T-cell (primary cell): ENCODE measurements at regions of chr5 and their contacts with region 1.

Region 1: DNA sequence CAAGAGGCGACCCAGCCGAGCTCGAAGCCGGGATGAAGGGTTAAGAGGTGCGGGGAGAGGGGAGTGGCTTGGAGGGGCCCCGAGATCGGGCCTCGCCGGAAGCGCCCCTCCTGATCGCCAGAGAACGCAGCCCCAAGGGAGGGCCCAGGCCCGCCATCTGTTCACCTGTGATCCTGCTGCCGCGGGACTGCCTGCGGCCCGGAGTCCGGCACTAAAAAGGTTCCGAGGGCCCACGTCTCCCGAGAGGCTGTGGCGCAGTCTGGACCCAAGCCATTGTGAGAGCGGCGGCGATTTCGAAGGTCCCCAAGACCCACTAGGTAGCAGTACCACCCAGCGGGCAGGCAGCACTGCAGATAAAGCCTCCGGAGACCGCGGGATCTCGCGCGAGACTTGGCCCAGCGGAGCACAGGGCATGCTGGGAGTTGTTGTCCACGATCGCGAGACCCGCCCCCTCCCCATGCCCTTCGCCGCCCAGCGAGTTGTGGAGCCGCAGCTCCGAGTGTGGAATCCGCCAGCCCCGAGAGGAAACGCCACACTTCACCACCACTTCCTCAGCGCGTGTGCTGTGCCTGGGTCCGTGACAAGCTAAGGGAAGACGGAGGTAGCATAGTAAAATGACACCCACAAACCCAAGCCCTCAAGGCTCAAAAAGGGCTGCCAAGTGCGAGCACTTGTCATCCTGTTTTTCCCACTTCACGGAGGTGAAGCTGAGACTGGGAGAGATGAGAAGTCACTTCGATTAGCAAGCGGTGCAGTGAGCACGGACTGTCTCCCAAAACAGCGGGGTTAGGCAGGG is at the start of gene KIAA1191:
- DNase-seq: peak; percentile 89 to 97 (median 96)
- ATAC-seq: peak; percentile 91 to 92 (median 92)
- H3K4me3 ChIP-seq: peak within 1 kb of the TSS; percentile 92 to 95
- H3K4me3 Mint-ChIP-seq: peak within 1 kb of the TSS; percentile 92 to 98 (median 98)
- H3K27ac ChIP-seq: peak within 1 kb of the TSS; percentile 72
- H3K27ac Mint-ChIP-seq: peak within 1 kb of the TSS; percentile 95 to 99
- H3K4me1 ChIP-seq: peaks cover 14 to 44% of the 10 kb centered on the region in 2 experiments
- H3K4me1 Mint-ChIP-seq: peaks cover 32 to 41% (median 36%) of the 10 kb centered on the region in 3 donors
- H3K27me3 ChIP-seq: no peaks in the 10 kb centered on the region
- H3K27me3 Mint-ChIP-seq: no peaks in the 10 kb centered on the region
- total RNA-seq, gene KIAA1191: 66.4 to 79.3 (median 72.8) TPM

Region 2: GRCh38 chr5:175469945-175470596 is 891.6 kb before region 1 on chr5:
- CTCF ChIA-PET with region 1: no interaction called
- POLR2A ChIA-PET with region 1: interaction called in 1 of 2 experiments, 12 read pairs
- DNase-seq: no peak
- ATAC-seq: no peak
- H3K4me3 ChIP-seq: no peak overlapping the region
- H3K4me3 Mint-ChIP-seq: no peak overlapping the region
- H3K27ac ChIP-seq: no peak overlapping the region
- H3K27ac Mint-ChIP-seq: no peak overlapping the region
- H3K4me1 ChIP-seq: no peaks in the 10 kb centered on the region
- H3K4me1 Mint-ChIP-seq: peaks cover 0 to 9% (median 5%) of the 10 kb centered on the region in 3 donors
- H3K27me3 ChIP-seq: no peaks in the 10 kb centered on the region
- H3K27me3 Mint-ChIP-seq: peaks cover 0 to 2% of the 10 kb centered on the region in 2 donors

Region 3: DNA sequence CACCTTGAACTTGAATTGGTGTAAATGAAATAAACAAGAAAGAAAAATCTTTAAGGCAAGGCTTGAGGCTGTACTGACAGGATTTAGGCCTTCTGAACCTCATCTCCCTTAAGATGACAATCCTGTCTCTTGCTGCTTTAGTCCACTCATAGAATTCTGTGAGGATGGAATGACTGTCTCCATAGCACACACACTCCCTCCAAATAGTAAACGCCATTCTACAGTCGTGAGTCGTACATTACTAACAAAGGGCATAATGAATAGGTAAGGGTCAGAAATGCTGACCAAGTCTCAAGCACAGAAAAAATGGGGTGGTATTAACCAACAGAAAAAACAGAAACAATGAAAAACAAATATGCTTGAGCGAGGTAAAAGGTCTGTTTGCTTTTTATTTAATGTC is 195.2 kb before region 1 on chr5:
- CTCF ChIA-PET with region 1: no interaction called
- POLR2A ChIA-PET with region 1: no interaction called
- DNase-seq: no peak
- ATAC-seq: no peak
- H3K4me3 ChIP-seq: no peak overlapping the region
- H3K4me3 Mint-ChIP-seq: no peak overlapping the region
- H3K27ac ChIP-seq: no peak overlapping the region
- H3K27ac Mint-ChIP-seq: no peak overlapping the region
- H3K4me1 ChIP-seq: no peaks in the 10 kb centered on the region
- H3K4me1 Mint-ChIP-seq: peaks cover 2 to 7% (median 2%) of the 10 kb centered on the region in 3 donors
- H3K27me3 ChIP-seq: no peaks in the 10 kb centered on the region
- H3K27me3 Mint-ChIP-seq: peaks cover 9 to 25% of the 10 kb centered on the region in 2 donors

Region 4: DNA sequence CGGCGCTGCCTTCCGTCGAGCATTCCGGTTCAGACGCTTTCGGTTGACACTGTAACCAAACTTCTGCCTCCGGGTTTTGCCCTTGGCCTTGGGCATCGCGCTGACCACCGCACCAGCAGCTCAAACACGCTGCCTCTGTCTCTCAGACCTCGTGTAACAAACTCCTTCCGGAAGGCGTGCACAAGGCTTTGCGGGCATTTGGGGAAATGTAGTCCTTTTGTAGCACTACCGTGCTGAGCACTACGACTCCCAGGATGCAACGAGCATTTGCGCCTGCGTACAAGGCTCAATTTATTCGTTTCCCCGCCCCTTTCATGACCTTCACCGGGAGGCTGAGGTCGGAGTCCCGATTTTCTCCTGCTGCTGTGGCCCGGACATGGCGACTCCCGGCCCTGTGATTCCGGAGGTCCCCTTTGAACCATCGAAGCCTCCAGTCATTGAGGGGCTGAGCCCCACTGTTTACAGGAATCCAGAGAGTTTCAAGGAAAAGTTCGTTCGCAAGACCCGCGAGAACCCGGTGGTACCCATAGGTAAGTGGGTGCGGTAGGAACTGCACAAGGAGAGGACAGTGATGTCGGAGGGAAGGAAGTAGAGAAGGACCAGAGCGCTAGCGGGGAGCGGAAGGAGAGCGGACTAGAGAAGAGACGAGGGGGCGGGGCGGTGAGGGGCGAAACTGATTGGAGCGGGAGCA is 27.0 kb after region 1 on chr5 and contains the starts of genes HIGD2A and NOP16:
- CTCF ChIA-PET with region 1: interaction called in 1 of 2 experiments, 12 read pairs
- POLR2A ChIA-PET with region 1: no interaction called
- DNase-seq: peak; percentile 96 to 100 (median 99)
- ATAC-seq: peak; percentile 88 to 89 (median 88)
- H3K4me3 ChIP-seq: peak within 1 kb of the TSS; percentile 82 to 95
- H3K4me3 Mint-ChIP-seq: peak within 1 kb of the TSS; percentile 89 to 99 (median 95)
- H3K27ac ChIP-seq: peak within 1 kb of the TSS; percentile 87
- H3K27ac Mint-ChIP-seq: peak within 1 kb of the TSS; percentile 100
- H3K4me1 ChIP-seq: peaks cover 10 to 29% of the 10 kb centered on the region in 2 experiments
- H3K4me1 Mint-ChIP-seq: peaks cover 26 to 36% (median 36%) of the 10 kb centered on the region in 3 donors
- H3K27me3 ChIP-seq: no peaks in the 10 kb centered on the region
- H3K27me3 Mint-ChIP-seq: no peaks in the 10 kb centered on the region
- total RNA-seq, gene HIGD2A: 88.5 to 117 (median 95.4) TPM
- total RNA-seq, gene NOP16: 10.4 to 29.3 (median 28.3) TPM